GM12878 (cell line): ENCODE measurements at regions of chr11 and their contacts with region 1.

Region 1: DNA sequence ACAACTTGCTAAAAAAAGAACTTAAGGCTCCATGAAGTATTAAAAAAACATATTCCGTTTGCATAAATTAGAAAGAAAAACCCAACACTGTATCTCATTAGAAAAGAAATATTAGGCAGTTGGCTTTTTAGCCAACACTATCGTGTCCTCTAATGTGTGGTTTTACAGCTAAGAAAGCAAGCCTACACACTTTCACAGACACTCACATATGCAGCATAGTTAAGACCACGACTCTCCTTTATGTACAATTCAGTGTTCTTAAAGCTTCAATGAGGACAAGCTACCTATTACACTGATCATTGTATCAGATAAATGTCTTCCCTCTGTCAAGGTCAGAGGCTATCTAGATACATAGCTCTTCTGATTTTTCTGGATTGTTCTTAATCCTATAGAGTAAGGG is 80.1 kb downstream of the PICALM start:
- DNase-seq: no peak
- ATAC-seq: peak; percentile 62
- H3K4me3 ChIP-seq: no peak overlapping the region
- H3K27ac ChIP-seq: no peak overlapping the region
- H3K4me1 ChIP-seq: no peaks in the 10 kb centered on the region; the same call in 1 of the 2 replicates
- H3K27me3 ChIP-seq: no peaks in the 10 kb centered on the region
- CTCF ChIP-seq: no peak
- EP300 ChIP-seq: no peak
- POLR2A ChIP-seq: no peak
- RAD21 ChIP-seq: no peak

Region 2: GRCh38 chr11:85974122-85974521 is 14.7 kb before region 1 on chr11:
- CTCF ChIA-PET with region 1: interaction called, 6 read pairs
- POLR2A ChIA-PET with region 1: interaction called, 9 read pairs
- RAD21 ChIA-PET with region 1: no interaction called
- SMC1A ChIA-PET with region 1: interaction called, 12 read pairs
- in situ Hi-C with region 1: no loop called
- intact Hi-C with region 1: no loop called
- DNase-seq: no peak
- ATAC-seq: no peak
- H3K4me3 ChIP-seq: no peak overlapping the region
- H3K27ac ChIP-seq: no peak overlapping the region
- H3K4me1 ChIP-seq: no peaks in the 10 kb centered on the region
- H3K27me3 ChIP-seq: no peaks in the 10 kb centered on the region
- CTCF ChIP-seq: no peak
- EP300 ChIP-seq: no peak
- POLR2A ChIP-seq: no peak
- RAD21 ChIP-seq: no peak

Region 3: DNA sequence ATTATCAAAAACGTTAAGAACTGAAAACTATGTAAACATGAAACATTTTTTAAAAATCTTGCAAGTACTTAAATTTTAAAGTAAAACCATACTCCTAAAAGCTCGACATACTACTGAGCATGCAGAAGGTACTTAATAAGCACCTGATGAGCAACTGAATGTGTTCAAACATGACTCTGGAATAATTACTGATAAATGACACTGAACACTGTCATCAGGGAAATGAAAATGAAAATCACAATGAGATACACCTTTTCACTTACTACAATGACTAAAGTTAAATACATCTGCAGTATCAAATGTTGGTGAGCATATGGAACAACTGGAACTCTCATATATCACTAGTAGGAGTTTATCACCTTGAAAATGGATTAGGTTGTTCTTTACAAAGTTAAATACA is 14.9 kb after region 1 on chr11:
- CTCF ChIA-PET with region 1: interaction called, 3 read pairs
- POLR2A ChIA-PET with region 1: interaction called, 4 read pairs
- RAD21 ChIA-PET with region 1: no interaction called
- SMC1A ChIA-PET with region 1: interaction called, 10 read pairs
- in situ Hi-C with region 1: no loop called
- intact Hi-C with region 1: no loop called
- DNase-seq: no peak
- ATAC-seq: no peak
- H3K4me3 ChIP-seq: no peak overlapping the region
- H3K27ac ChIP-seq: no peak overlapping the region
- H3K4me1 ChIP-seq: no peaks in the 10 kb centered on the region
- H3K27me3 ChIP-seq: no peaks in the 10 kb centered on the region
- CTCF ChIP-seq: no peak
- EP300 ChIP-seq: no peak
- POLR2A ChIP-seq: no peak
- RAD21 ChIP-seq: no peak